Activated CD4-positive, alpha-beta T cell treated with anti-CD3 and anti-CD28 coated beads, Interleukin-2, amount 10 ng/mL, durations not matched to agents 7 days and 5 days (primary cell): ENCODE measurements at regions of chr6 and their contacts with region 1.

Region 1: GRCh38 chr6:26312501-26313390 is 52.3 kb upstream of the BTN3A2 start:
- DNase-seq: peak; percentile 81
- H3K4me3 Mint-ChIP-seq: peak overlapping the region; percentile 89
- H3K27ac Mint-ChIP-seq: peak overlapping the region; percentile 94
- H3K4me1 Mint-ChIP-seq: peaks cover 54% of the 10 kb centered on the region
- H3K27me3 Mint-ChIP-seq: no peaks in the 10 kb centered on the region

Region 2: GRCh38 chr6:26216356-26216885 is 96.3 kb before region 1 on chr6:
- CTCF ChIA-PET with region 1: no interaction called
- POLR2A ChIA-PET with region 1: no interaction called
- DNase-seq: peak; percentile 92
- H3K4me3 Mint-ChIP-seq: no peak overlapping the region
- H3K27ac Mint-ChIP-seq: no peak overlapping the region
- H3K4me1 Mint-ChIP-seq: peaks cover 39% of the 10 kb centered on the region
- H3K27me3 Mint-ChIP-seq: no peaks in the 10 kb centered on the region

Region 3: GRCh38 chr6:26322645-26323482 is 10.1 kb after region 1 on chr6:
- CTCF ChIA-PET with region 1: interaction called, 20 read pairs
- POLR2A ChIA-PET with region 1: no interaction called
- DNase-seq: peak; percentile 76
- H3K4me3 Mint-ChIP-seq: peak overlapping the region; percentile 78
- H3K27ac Mint-ChIP-seq: peak overlapping the region; percentile 86
- H3K4me1 Mint-ChIP-seq: peaks cover 56% of the 10 kb centered on the region
- H3K27me3 Mint-ChIP-seq: peaks cover 21% of the 10 kb centered on the region